ENCODE measurements at regions of chr12 and their contacts with region 1.

Region 1: GRCh38 chr12:117025481-117026151 is 73.6 kb downstream of the TESC start:
- DNase-seq: peak; percentile 88
- H3K4me3 ChIP-seq: no peak overlapping the region
- H3K27ac ChIP-seq: peak overlapping the region in 2 of 8 donors; percentile 8 to 44
- H3K4me1 ChIP-seq: peaks cover 0 to 9% (median 7%) of the 10 kb centered on the region in 6 donors
- H3K27me3 ChIP-seq: no peaks in the 10 kb centered on the region
- CTCF ChIP-seq: peak; percentile 74 to 94 (median 89)
- POLR2A ChIP-seq: no peak

Region 2: GRCh38 chr12:116434155-116435011 is 591.2 kb before region 1 on chr12:
- intact Hi-C with region 1: no loop called
- DNase-seq: no peak
- H3K4me3 ChIP-seq: no peak overlapping the region
- H3K27ac ChIP-seq: peak overlapping the region in 7 of 8 donors; percentile 46 to 62 (median 60)
- H3K4me1 ChIP-seq: peaks cover 0 to 18% (median 3%) of the 10 kb centered on the region in 6 donors
- H3K27me3 ChIP-seq: no peaks in the 10 kb centered on the region
- CTCF ChIP-seq: no peak
- POLR2A ChIP-seq: no peak

Region 3: DNA sequence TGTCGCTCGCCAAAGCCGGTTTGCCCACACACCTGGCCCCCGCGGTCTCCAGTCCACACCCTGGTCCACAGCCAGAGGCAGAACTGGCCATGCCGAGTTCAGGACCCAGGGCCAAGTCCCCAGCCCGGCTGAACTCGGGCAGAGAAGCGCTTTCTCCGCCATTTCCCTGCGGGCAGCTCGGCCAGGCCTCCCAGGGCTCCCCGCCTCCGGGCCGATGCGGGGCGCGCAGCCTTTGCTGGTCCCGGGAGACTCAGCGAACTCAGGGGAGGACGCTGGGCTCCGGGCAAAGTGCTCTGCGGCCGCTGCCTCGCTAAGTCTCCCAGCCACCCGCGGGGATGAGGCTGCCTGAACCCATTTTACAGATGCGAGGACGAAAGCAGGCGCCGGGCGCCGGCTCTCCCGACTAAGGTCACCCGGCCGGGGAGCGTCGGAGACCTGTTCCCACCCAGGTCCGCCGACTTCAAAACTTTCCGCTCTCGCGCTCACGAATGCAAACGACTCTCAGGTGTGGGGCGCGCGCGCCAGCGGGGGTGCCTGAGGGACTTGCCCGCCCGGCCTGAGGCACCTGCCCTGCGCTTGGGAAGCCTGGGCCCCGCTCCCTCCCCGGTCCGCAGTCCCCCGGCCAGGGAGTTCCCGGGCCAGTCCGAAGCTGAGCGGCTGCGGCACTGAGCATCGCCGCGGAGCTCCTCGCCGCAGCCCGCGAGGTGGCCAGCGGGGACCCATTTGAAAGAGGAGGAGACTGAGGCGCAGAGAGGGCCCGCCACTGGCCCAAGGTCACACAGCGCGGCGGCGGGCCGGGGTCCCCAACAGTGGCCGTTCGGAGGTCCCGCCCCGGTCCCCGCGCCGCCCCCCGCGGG is 73.0 kb after region 1 on chr12:
- intact Hi-C with region 1: no loop called
- DNase-seq: peak; percentile 88
- H3K4me3 ChIP-seq: peak overlapping the region; percentile 27 to 95 (median 73)
- H3K27ac ChIP-seq: peak overlapping the region in 5 of 8 donors; percentile 20 to 82 (median 74)
- H3K4me1 ChIP-seq: peaks cover 5 to 44% (median 29%) of the 10 kb centered on the region in 6 donors
- H3K27me3 ChIP-seq: peaks cover 0 to 71% (median 33%) of the 10 kb centered on the region in 7 donors
- CTCF ChIP-seq: no peak
- POLR2A ChIP-seq: no peak

Region 4: DNA sequence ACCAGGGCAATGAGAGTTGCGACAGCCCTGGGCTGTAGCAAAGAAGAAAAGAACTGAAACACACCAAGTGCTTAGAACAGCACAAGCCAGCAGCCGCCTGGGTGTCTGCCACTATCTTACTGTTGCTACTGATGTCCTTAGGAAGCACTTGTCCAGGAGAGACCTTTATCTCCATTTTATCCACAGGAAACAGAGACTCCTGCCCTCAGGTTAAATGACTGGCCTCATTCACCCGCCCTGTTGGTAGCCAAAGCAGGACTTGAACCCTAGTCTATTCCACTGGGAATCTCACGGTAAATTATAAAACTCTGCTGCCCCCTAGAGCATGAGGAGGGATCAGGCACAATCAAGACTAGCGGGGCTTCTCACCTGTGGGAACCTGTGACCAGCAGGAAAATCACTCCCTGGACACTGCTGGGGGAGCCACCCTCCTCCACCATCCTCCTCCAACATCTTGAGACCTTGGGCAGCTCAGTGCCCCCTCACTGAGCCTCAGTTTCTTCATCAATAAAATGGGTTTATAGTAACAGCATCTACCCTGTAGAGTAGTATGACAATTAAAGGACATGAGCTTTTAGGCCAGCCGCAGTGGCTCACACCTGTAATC is 94.1 kb after region 1 on chr12:
- intact Hi-C with region 1: loop called (anchors 2 kb)
- DNase-seq: no peak
- H3K4me3 ChIP-seq: no peak overlapping the region
- H3K27ac ChIP-seq: no peak overlapping the region
- H3K4me1 ChIP-seq: peaks cover 0 to 16% (median 4%) of the 10 kb centered on the region in 6 donors
- H3K27me3 ChIP-seq: no peaks in the 10 kb centered on the region
- CTCF ChIP-seq: peak; percentile 30 to 79 (median 71)
- POLR2A ChIP-seq: no peak

Measured in spleen (tissue), 13 donors.